AG04450 (cell line): ENCODE measurements at regions of chr3 and their contacts with region 1.

Region 1: GRCh38 chr3:149609595-149609994 is 48.2 kb downstream of the WWTR1 start:
- DNase-seq: no peak
- H3K4me3 ChIP-seq: no peak overlapping the region
- H3K27ac ChIP-seq: no peak overlapping the region
- H3K27me3 ChIP-seq: no peaks in the 10 kb centered on the region
- CTCF ChIP-seq: no peak

Region 2: GRCh38 chr3:149575961-149576564 is 33.5 kb before region 1 on chr3:
- CTCF ChIA-PET with region 1: no interaction called
- POLR2A ChIA-PET with region 1: interaction called, 11 read pairs
- DNase-seq: peak; percentile 90
- H3K4me3 ChIP-seq: peak overlapping the region; percentile 34
- H3K27ac ChIP-seq: peak overlapping the region; percentile 99
- H3K27me3 ChIP-seq: no peaks in the 10 kb centered on the region
- CTCF ChIP-seq: no peak